ENCODE measurements at regions of chr16 and their contacts with region 1.

Region 1: DNA sequence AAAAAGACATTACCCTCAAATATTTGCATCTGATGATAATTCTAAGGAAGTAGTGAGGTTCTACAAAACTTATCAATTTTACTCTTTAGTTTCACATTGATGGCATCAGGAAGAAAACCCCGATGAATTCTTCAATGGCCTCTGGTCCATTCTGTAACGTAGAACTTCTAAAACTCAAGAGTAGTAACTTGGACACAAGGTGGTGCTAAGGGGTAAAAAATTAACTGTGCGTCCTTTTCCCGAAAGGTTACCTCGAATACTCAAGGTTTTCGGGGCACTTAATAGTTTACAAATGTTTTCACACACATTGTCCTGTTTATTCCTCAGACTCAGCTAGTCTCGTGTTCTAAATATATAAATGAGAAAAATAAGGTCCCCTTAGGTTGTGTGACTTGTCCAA is 517.3 kb upstream of the ZFHX3 start:
- DNase-seq: peak in 1 of 4 experiments; percentile 21
- ATAC-seq: 0 out of 3 replicates have a peak, but pooled peaks have one; percentile 51
- H3K4me3 ChIP-seq: no peak overlapping the region
- H3K27ac ChIP-seq: no peak overlapping the region
- H3K4me1 ChIP-seq: no peaks in the 10 kb centered on the region
- H3K27me3 ChIP-seq: peaks cover 7 to 8% of the 10 kb centered on the region in 2 experiments; a peak in 3 of 5 replicates
- CTCF ChIP-seq: peak; percentile 18 to 47 (median 33); a peak in 3 of 6 replicates
- EP300 ChIP-seq: no peak
- POLR2A ChIP-seq: no peak
- RAD21 ChIP-seq: peak; percentile 31 to 45; a peak in 3 of 4 replicates

Region 2: DNA sequence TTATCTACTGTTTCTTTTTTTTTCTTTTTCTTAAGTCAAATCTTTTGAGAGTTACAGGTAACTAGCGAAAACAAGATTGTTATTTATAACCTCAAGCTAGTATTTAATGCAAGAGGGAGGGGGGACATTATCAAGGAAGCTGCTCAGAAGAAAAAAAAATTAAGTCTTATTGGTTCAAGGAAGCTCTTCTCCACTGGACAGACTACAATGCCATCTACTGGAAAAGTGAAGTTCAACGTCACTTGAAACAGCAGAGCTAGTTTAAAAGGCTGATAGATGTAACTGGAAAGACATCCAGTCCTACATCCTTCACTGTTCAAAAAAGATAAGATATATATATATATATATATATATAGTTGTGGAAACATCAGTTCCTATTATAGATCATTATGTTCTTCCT is 313.3 kb after region 1 on chr16:
- CTCF ChIA-PET with region 1: no interaction called
- POLR2A ChIA-PET with region 1: no interaction called
- in situ Hi-C with region 1: no loop called
- intact Hi-C with region 1: loop called (anchors 2 kb)
- DNase-seq: peak in 3 of 4 experiments; percentile 7 to 47 (median 26)
- ATAC-seq: peak; percentile 67
- H3K4me3 ChIP-seq: no peak overlapping the region
- H3K27ac ChIP-seq: no peak overlapping the region
- H3K4me1 ChIP-seq: no peaks in the 10 kb centered on the region
- H3K27me3 ChIP-seq: no peaks in the 10 kb centered on the region
- CTCF ChIP-seq: peak; percentile 30 to 67 (median 41); a peak in 4 of 6 replicates
- EP300 ChIP-seq: no peak
- POLR2A ChIP-seq: no peak
- RAD21 ChIP-seq: peak; percentile 75 to 81

Region 3: DNA sequence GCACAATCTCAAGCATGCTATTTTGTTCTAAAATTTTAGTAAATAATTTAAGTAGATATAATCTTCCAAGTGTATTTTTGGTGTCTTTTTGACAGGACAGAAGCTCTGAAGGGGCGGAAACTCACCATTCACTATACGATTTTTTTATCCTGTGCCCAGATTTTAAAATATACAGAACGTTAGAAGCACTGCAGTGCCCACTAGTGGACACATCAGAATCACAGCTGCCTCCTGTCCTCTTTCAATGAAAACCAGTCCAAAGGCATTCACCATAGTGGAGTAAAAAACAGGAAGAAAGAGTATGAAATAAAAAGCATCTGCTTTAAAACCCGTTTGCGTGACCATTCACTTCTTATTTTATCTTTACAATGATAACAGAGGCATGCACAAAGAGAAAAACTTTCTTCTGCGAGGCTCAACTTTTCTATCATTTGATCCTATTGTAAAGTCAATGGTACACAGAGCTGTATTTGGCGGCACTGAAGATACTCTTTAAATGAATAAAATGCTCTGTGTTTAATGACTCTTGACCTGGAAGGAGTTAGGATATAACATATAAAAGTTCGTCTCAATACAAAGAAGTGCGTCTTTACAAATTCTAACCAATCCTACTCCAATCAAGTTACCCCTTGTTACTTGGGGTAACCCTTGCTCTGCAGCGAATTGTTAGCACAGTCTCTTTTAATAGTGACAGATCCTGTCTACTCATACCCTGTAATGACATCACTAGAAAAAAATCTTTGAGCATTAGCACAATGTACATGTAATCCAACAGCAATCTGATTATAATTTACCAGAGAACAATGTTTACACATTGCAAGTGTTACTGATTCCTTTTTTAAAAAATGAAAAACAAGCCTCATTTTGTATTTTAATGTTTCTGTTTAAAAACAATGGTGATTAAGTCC is 391.6 kb after region 1 on chr16:
- CTCF ChIA-PET with region 1: no interaction called
- POLR2A ChIA-PET with region 1: no interaction called
- in situ Hi-C with region 1: no loop called
- intact Hi-C with region 1: loop called (anchors 10 kb)
- DNase-seq: peak; percentile 44 to 61 (median 51)
- ATAC-seq: peak; percentile 71; the same call in 2 of the 3 replicates
- H3K4me3 ChIP-seq: no peak overlapping the region
- H3K27ac ChIP-seq: no peak overlapping the region
- H3K4me1 ChIP-seq: no peaks in the 10 kb centered on the region
- H3K27me3 ChIP-seq: no peaks in the 10 kb centered on the region
- CTCF ChIP-seq: peak; percentile 58 to 79 (median 76); a peak in 5 of 6 replicates
- EP300 ChIP-seq: no peak
- POLR2A ChIP-seq: no peak
- RAD21 ChIP-seq: peak; percentile 41 to 71